ENCODE measurements at regions of chr16 and their contacts with region 1.

Region 1: DNA sequence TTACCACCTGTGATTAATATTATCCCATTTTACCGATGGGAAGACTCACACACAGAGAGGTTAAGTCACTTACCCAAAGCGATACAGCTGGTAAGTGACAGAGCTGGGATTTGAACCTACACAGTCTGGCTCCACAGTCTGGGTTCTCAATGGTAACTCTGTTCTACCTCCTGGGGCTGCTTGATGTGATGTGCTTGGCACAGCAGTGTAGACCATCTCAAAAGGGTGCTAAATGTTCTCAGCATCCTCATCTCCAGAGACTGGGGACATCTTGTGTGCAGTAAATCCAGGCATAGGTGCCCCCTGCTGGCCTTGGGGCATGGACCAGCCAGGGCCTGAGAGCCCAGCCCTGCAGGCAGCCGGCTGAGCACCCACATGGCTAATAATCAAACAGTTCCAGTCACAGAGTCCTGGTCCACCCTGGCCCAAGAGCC is 15.4 kb upstream of the KATNB1 start:
- DNase-seq: peak; percentile 90
- H3K4me3 Mint-ChIP-seq: no peak overlapping the region
- H3K27ac Mint-ChIP-seq: no peak overlapping the region
- H3K4me1 Mint-ChIP-seq: no peaks in the 10 kb centered on the region
- H3K27me3 Mint-ChIP-seq: peaks cover 34% of the 10 kb centered on the region
- CTCF ChIP-seq: peak; percentile 68

Region 2: DNA sequence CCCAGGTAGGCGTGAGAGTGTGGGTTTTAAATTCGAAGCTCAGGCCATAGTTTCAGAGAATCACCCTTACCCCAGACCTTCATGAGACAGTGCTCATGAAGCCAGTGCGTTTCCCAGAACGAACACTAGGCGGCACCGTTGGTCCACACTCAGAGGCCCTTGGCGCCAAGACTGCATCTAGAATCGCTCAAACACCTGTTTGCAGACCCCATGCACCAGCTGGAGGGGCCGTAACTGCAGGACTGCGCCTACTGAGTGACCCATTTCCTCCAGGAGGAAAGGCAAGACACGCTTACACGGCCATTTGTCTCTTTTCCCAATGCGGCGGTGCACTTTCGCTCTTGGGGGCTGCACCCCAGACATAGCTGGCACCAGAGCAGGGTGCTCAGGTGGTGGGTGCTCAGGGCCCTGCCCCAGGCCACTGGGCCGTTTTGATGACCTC is 143.7 kb before region 1 on chr16:
- CTCF ChIA-PET with region 1: interaction called, 5 read pairs
- intact Hi-C with region 1: loop called (anchors 1 kb)
- DNase-seq: peak; percentile 82
- H3K4me3 Mint-ChIP-seq: no peak overlapping the region
- H3K27ac Mint-ChIP-seq: no peak overlapping the region
- H3K4me1 Mint-ChIP-seq: peaks cover 8% of the 10 kb centered on the region
- H3K27me3 Mint-ChIP-seq: peaks cover 35% of the 10 kb centered on the region
- CTCF ChIP-seq: peak; percentile 98

Measured in Calu3 (cell line).